ENCODE measurements at regions of chr1 and their contacts with region 1.

Region 1: GRCh38 chr1:182962554-182963115 is 9.7 kb upstream of the SHCBP1L start:
- DNase-seq: peak; percentile 70 to 82
- H3K4me3 ChIP-seq: peak overlapping the region; percentile 41; the same call in 1 of the 2 replicates
- H3K27ac ChIP-seq: peak overlapping the region; percentile 59
- H3K4me1 ChIP-seq: peaks cover 13% of the 10 kb centered on the region
- H3K27me3 ChIP-seq: no peaks in the 10 kb centered on the region
- CTCF ChIP-seq: peak; percentile 95

Region 2: GRCh38 chr1:183003203-183003602 is 40.6 kb after region 1 on chr1:
- CTCF ChIA-PET with region 1: no interaction called
- POLR2A ChIA-PET with region 1: interaction called, 11 read pairs
- intact Hi-C with region 1: no loop called
- DNase-seq: no peak
- H3K4me3 ChIP-seq: no peak overlapping the region
- H3K27ac ChIP-seq: no peak overlapping the region
- H3K4me1 ChIP-seq: 0 out of 2 replicates have a peak, but pooled peaks cover 8% of the 10 kb centered on the region
- H3K27me3 ChIP-seq: no peaks in the 10 kb centered on the region
- CTCF ChIP-seq: no peak

Region 3: GRCh38 chr1:183129921-183130690 is 167.5 kb after region 1 on chr1:
- CTCF ChIA-PET with region 1: no interaction called
- POLR2A ChIA-PET with region 1: no interaction called
- intact Hi-C with region 1: loop called (anchors 5 kb)
- DNase-seq: no peak
- H3K4me3 ChIP-seq: no peak overlapping the region
- H3K27ac ChIP-seq: no peak overlapping the region
- H3K4me1 ChIP-seq: no peaks in the 10 kb centered on the region
- H3K27me3 ChIP-seq: no peaks in the 10 kb centered on the region
- CTCF ChIP-seq: no peak

Region 4: GRCh38 chr1:183234660-183235476 is 272.2 kb after region 1 on chr1:
- CTCF ChIA-PET with region 1: interaction called, 4 read pairs
- POLR2A ChIA-PET with region 1: interaction called, 5 read pairs
- intact Hi-C with region 1: loop called (anchors 2 kb)
- DNase-seq: peak; percentile 81 to 96
- H3K4me3 ChIP-seq: peak overlapping the region; percentile 45; the same call in 1 of the 2 replicates
- H3K27ac ChIP-seq: peak overlapping the region; percentile 92
- H3K4me1 ChIP-seq: peaks cover 41% of the 10 kb centered on the region
- H3K27me3 ChIP-seq: no peaks in the 10 kb centered on the region
- CTCF ChIP-seq: peak; percentile 77

Region 5: DNA sequence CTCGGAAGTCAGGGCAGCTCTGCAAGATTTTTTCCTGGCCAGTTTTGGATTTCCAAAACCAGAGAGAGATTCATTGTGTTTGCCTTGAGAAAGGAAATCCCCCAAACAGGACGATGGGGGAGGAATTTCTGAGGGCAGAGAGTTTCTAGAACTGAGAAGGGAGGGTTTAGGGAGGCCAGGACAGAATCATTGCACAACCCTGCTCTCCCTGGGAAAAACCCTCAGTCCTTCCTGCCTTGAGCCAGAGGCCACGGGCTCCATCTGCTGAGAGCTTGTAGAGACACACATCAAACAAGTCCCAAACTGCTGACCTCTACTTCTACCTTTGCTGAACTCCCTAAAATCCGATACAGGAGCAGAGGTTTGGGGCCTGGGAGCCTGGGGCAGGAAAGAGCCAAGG is 355.8 kb after region 1 on chr1:
- CTCF ChIA-PET with region 1: no interaction called
- POLR2A ChIA-PET with region 1: no interaction called
- intact Hi-C with region 1: loop called (anchors 1 kb)
- DNase-seq: peak; percentile 60 to 70
- H3K4me3 ChIP-seq: no peak overlapping the region
- H3K27ac ChIP-seq: peak overlapping the region; percentile 22; the same call in 1 of the 2 replicates
- H3K4me1 ChIP-seq: peaks cover 33% of the 10 kb centered on the region
- H3K27me3 ChIP-seq: no peaks in the 10 kb centered on the region
- CTCF ChIP-seq: peak; percentile 62

Region 6: GRCh38 chr1:183622884-183623785 is 660.5 kb after region 1 on chr1:
- CTCF ChIA-PET with region 1: interaction called, 4 read pairs
- POLR2A ChIA-PET with region 1: no interaction called
- intact Hi-C with region 1: loop called (anchors 1 kb)
- DNase-seq: peak; percentile 60 to 65
- H3K4me3 ChIP-seq: no peak overlapping the region
- H3K27ac ChIP-seq: peak overlapping the region; percentile 64
- H3K4me1 ChIP-seq: peaks cover 33% of the 10 kb centered on the region
- H3K27me3 ChIP-seq: no peaks in the 10 kb centered on the region
- CTCF ChIP-seq: peak; percentile 87